Heart left ventricle (tissue), 16 donors: ENCODE measurements at regions of chr10 and their contacts with region 1.

Region 1: DNA sequence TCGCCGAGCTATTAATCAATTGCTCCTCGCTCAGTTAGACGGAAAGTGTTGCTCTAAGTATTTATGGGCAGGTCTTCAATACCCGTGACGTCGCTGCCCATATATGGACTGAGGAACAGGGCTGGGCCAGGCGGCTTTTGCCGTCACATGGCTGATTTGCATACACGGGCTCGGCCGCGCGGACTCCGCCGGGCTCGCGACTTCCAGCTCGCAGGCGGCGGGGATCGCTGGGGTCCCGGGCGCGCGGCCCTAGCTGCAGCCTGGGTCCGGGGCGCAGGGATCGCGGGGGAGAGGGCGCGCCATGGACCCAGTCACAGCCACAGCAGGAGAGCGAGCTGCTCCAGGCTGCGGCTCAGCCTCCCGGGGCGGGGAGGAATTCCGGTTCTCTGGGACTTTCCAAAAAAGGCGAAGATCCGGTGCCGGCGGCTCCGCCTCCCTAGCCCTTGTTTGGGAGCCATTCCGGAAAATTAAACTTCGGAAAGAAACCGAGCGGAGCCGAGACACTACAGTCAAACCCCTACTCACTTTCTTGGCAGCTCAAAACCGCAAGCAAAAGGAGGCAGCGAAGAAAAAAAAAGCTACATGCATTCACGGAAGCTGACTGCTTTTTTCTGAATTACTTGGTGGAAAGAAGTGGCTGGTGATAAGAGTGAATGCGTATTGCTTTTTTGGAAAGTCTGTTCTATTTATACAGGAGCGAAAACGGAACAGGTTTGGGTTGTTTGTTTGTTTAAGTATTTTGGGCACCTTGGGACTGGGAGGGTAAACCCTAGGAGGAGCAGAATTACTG is at the start of gene EGR2:
- DNase-seq: peak; percentile 93 to 95 (median 94)
- ATAC-seq: peak; percentile 75 to 93 (median 86)
- H3K4me3 ChIP-seq: peak within 1 kb of the TSS; percentile 37 to 91 (median 78)
- H3K27ac ChIP-seq: peak within 1 kb of the TSS; percentile 63 to 93 (median 87)
- H3K4me1 ChIP-seq: peaks cover 0 to 48% (median 28%) of the 10 kb centered on the region in 12 donors
- H3K27me3 ChIP-seq: peaks cover 0 to 50% (median 17%) of the 10 kb centered on the region in 9 donors
- CTCF ChIP-seq: no peak
- POLR2A ChIP-seq: no peak
- total RNA-seq, gene EGR2: 0.37 to 8.5 (median 1.9) TPM

Region 2: DNA sequence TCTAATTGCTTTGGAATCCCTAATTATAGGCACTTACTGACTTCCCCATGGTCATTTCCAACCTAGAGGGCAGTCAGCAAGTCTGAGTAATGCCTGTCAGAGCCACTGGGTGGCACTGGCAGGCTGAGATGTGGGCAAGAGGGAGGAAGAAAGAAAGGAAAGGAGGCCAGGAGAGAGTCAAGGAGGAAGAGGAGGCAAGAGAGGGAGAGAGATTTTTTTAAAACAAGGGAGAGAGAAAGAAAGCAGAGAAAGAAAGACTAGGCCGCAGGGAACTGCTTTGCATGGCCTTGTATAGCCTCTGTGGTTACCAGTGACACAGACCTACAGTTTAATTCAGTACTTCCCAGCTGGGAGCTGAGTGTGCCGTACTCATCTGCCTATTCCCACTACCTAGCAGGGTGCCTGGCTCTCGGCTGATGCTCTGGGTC is 222.4 kb before region 1 on chr10:
- intact Hi-C with region 1: loop called in 5 of 10 experiments (anchors 5 to 10 kb)
- DNase-seq: peak; percentile 51 to 79 (median 58)
- ATAC-seq: peak in 3 of 4 donors; percentile 83 to 94 (median 86)
- H3K4me3 ChIP-seq: no peak overlapping the region
- H3K27ac ChIP-seq: no peak overlapping the region
- H3K4me1 ChIP-seq: peaks cover 0 to 5% (median 0%) of the 10 kb centered on the region in 12 donors
- H3K27me3 ChIP-seq: no peaks in the 10 kb centered on the region
- CTCF ChIP-seq: peak; percentile 71 to 91 (median 86)
- POLR2A ChIP-seq: no peak

Region 3: DNA sequence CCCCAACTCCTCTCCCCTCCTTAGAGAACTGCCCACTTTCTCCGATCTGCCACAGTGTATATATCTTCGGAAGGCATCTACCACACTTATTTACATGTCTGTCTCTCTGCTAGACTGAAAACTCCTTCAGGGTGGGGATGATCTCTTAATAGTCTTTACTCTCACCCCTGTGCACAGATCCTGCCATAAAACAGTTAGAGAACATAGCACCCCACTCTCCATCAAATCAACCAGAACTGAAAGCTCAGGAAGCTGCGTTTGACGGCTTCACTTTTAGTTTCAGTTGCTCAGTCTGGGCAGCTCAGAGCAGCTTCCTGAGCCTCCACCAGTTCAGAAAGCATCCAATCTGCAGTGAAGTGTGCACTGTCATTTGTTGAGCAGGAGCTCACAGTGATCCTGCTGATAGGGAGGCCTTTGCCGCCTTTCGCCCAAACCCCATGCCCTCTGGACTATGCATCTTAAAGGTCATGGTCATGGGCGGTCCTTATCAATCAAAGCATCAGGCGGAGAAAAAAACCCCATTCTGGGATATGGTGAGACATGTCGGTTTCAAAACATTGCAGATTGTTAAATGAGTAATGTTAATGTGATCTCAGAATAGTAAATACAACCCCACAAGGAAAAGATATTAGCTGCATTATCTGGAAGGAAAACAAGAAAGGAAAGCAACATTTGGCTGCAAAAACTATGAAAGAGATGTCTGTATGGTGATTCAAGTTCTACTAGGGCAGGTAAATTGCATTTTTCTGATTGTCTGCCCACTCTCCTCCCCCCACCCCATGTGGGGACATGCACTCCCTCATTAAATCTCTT is 179.1 kb before region 1 on chr10:
- intact Hi-C with region 1: loop called in 2 of 10 experiments (anchors 2 to 10 kb)
- DNase-seq: peak in 2 of 5 donors; percentile 29 to 36
- ATAC-seq: peak; percentile 40 to 70 (median 54)
- H3K4me3 ChIP-seq: peak overlapping the region in 9 of 12 donors; percentile 15 to 38 (median 22)
- H3K27ac ChIP-seq: peak overlapping the region; percentile 6 to 93 (median 49)
- H3K4me1 ChIP-seq: peaks cover 0 to 83% (median 15%) of the 10 kb centered on the region in 12 donors
- H3K27me3 ChIP-seq: no peaks in the 10 kb centered on the region
- CTCF ChIP-seq: no peak
- POLR2A ChIP-seq: no peak

Region 4: GRCh38 chr10:62760401-62760800 is 56.1 kb before region 1 on chr10:
- intact Hi-C with region 1: loop called in 1 of 10 experiments (anchors 2 kb)
- DNase-seq: peak in 4 of 5 donors; percentile 42 to 59 (median 46)
- ATAC-seq: peak in 2 of 4 donors; percentile 38 to 66
- H3K4me3 ChIP-seq: no peak overlapping the region
- H3K27ac ChIP-seq: peak overlapping the region in 10 of 12 donors; percentile 5 to 87 (median 54)
- H3K4me1 ChIP-seq: peaks cover 0 to 39% (median 16%) of the 10 kb centered on the region in 12 donors
- H3K27me3 ChIP-seq: no peaks in the 10 kb centered on the region
- CTCF ChIP-seq: no peak
- POLR2A ChIP-seq: no peak

Region 5: GRCh38 chr10:63133056-63133820 is 316.7 kb after region 1 on chr10 and contains the start of gene NRBF2:
- intact Hi-C with region 1: loop called in 5 of 10 experiments (anchors 10 kb)
- DNase-seq: peak; percentile 97 to 99 (median 99)
- ATAC-seq: peak; percentile 99 to 100 (median 100)
- H3K4me3 ChIP-seq: peak within 1 kb of the TSS; percentile 81 to 100 (median 94)
- H3K27ac ChIP-seq: peak within 1 kb of the TSS; percentile 78 to 99 (median 92)
- H3K4me1 ChIP-seq: peaks cover 5 to 41% (median 23%) of the 10 kb centered on the region in 12 donors
- H3K27me3 ChIP-seq: no peaks in the 10 kb centered on the region
- CTCF ChIP-seq: peak in 5 of 12 donors; percentile 8 to 39 (median 19)
- POLR2A ChIP-seq: peak; percentile 85 to 96
- total RNA-seq, gene NRBF2: 7.4 to 18.3 (median 10.7) TPM